Ovary (tissue), 10 donors: ENCODE measurements at regions of chr2 and their contacts with region 1.

Region 1: GRCh38 chr2:157497638-157498314 is 53.9 kb upstream of the CYTIP start:
- DNase-seq: no peak
- H3K4me3 ChIP-seq: no peak overlapping the region
- H3K27ac ChIP-seq: no peak overlapping the region
- H3K4me1 ChIP-seq: no peaks in the 10 kb centered on the region
- H3K27me3 ChIP-seq: no peaks in the 10 kb centered on the region
- CTCF ChIP-seq: peak in 1 of 3 donors; percentile 35
- EP300 ChIP-seq: no peak
- POLR2A ChIP-seq: no peak

Region 2: GRCh38 chr2:158013891-158014290 is 516.1 kb after region 1 on chr2:
- intact Hi-C with region 1: loop called in 3 of 4 experiments (anchors 2 to 5 kb)
- DNase-seq: no peak
- H3K4me3 ChIP-seq: no peak overlapping the region
- H3K27ac ChIP-seq: no peak overlapping the region
- H3K4me1 ChIP-seq: no peaks in the 10 kb centered on the region
- H3K27me3 ChIP-seq: no peaks in the 10 kb centered on the region
- CTCF ChIP-seq: no peak
- EP300 ChIP-seq: no peak
- POLR2A ChIP-seq: no peak